ENCODE measurements at regions of chr20 and their contacts with region 1.

Region 1: DNA sequence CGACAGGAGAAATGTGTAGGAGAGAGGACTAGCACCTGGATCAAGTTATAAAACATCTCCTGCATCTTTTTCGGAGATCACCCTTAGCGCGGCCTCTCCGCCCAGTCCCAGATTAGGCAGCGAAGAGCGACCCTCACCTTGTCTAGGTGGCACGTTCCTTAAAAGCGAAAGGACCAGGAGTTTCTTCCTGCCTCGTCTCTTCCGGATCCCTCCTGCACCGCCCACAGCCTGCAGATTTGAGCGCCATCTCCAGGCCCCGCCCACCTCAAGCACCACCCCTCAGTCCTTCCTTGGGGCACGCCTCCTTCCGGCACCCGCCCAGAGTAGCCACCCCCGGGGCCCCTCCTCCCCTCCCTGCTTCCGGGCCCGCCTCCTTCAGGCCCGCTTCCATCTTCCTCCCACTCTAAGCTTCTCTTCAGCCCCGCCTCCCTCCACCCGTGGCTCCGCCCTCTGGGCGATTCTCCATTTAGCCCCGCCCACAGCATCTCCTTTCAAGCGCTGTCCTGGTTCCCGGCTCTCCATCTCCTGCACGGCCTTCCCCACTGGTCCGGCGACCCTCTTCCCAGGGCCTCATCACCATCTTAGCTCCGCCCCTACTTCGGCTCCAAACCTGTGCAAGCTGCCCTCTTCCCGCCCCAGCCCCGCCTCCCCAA is 662 bp upstream of the RALY start:
- DNase-seq: peak; percentile 98
- H3K4me3 Mint-ChIP-seq: peak overlapping the region; percentile 95
- H3K27ac Mint-ChIP-seq: peak overlapping the region; percentile 96
- H3K4me1 Mint-ChIP-seq: peaks cover 16% of the 10 kb centered on the region
- H3K27me3 Mint-ChIP-seq: no peaks in the 10 kb centered on the region
- CTCF ChIP-seq: no peak

Region 2: DNA sequence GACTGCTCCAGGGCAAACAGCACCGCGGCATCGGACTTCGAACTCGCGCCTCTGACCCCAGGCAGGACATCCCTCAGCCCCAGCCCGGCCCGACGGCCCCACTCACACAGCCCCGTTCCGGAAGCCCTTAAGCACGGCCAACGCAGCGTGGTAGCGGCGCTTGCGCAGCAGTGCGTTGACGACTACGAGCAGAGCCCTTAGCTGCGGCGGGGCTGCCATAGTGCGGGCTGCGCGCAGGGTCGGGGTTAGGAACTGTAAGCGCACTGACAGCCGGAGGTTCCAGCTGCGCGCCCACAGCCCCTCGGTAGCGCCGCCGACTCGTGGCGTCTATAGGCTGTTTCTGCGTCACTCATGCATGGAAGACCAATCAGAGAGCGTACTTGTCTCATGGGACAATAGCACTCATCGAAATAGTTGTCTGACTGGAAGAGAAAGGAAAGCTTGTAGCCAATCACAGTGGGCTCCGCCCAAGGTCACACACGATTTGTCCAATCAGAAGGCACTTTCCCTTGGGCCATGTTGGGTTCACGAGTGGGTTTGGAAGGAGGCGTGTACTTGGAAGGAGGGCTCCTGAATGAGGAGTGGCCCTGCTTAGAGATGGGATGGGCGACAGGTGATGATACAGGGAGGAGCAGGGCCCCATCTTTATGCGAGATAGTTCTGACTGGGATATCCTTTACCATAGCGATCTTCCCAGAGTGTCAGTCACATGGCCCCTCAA is 272.9 kb before region 1 on chr20 and contains the start of gene PXMP4:
- CTCF ChIA-PET with region 1: no interaction called
- POLR2A ChIA-PET with region 1: interaction called, 13 read pairs
- intact Hi-C with region 1: no loop called
- DNase-seq: peak; percentile 98
- H3K4me3 Mint-ChIP-seq: peak within 1 kb of the TSS; percentile 67
- H3K27ac Mint-ChIP-seq: peak within 1 kb of the TSS; percentile 0
- H3K4me1 Mint-ChIP-seq: peaks cover 9% of the 10 kb centered on the region
- H3K27me3 Mint-ChIP-seq: no peaks in the 10 kb centered on the region
- CTCF ChIP-seq: no peak
- total RNA-seq, gene PXMP4: 3.9 and 5.2 TPM in 2 replicates

Region 3: GRCh38 chr20:33791959-33792597 is 201.0 kb before region 1 on chr20:
- CTCF ChIA-PET with region 1: no interaction called
- POLR2A ChIA-PET with region 1: interaction called, 11 read pairs
- intact Hi-C with region 1: no loop called
- DNase-seq: peak; percentile 48
- H3K4me3 Mint-ChIP-seq: no peak overlapping the region
- H3K27ac Mint-ChIP-seq: no peak overlapping the region
- H3K4me1 Mint-ChIP-seq: peaks cover 24% of the 10 kb centered on the region
- H3K27me3 Mint-ChIP-seq: no peaks in the 10 kb centered on the region
- CTCF ChIP-seq: peak; percentile 87

Region 4: GRCh38 chr20:33947709-33948295 is 45.2 kb before region 1 on chr20:
- CTCF ChIA-PET with region 1: no interaction called
- POLR2A ChIA-PET with region 1: interaction called, 9 read pairs
- intact Hi-C with region 1: loop called (anchors 5 kb)
- DNase-seq: peak; percentile 62
- H3K4me3 Mint-ChIP-seq: no peak overlapping the region
- H3K27ac Mint-ChIP-seq: no peak overlapping the region
- H3K4me1 Mint-ChIP-seq: peaks cover 9% of the 10 kb centered on the region
- H3K27me3 Mint-ChIP-seq: peaks cover 11% of the 10 kb centered on the region
- CTCF ChIP-seq: peak; percentile 63

Region 5: GRCh38 chr20:34022154-34022838 is 29.2 kb after region 1 on chr20:
- CTCF ChIA-PET with region 1: interaction called, 3 read pairs
- POLR2A ChIA-PET with region 1: interaction called, 10 read pairs
- intact Hi-C with region 1: no loop called
- DNase-seq: peak; percentile 45
- H3K4me3 Mint-ChIP-seq: no peak overlapping the region
- H3K27ac Mint-ChIP-seq: no peak overlapping the region
- H3K4me1 Mint-ChIP-seq: peaks cover 29% of the 10 kb centered on the region
- H3K27me3 Mint-ChIP-seq: no peaks in the 10 kb centered on the region
- CTCF ChIP-seq: peak; percentile 32

Region 6: GRCh38 chr20:34083137-34083536 is 90.1 kb after region 1 on chr20:
- CTCF ChIA-PET with region 1: interaction called, 5 read pairs
- POLR2A ChIA-PET with region 1: interaction called, 21 read pairs
- intact Hi-C with region 1: no loop called
- DNase-seq: peak; percentile 96
- H3K4me3 Mint-ChIP-seq: no peak overlapping the region
- H3K27ac Mint-ChIP-seq: peak overlapping the region; percentile 82
- H3K4me1 Mint-ChIP-seq: peaks cover 24% of the 10 kb centered on the region
- H3K27me3 Mint-ChIP-seq: no peaks in the 10 kb centered on the region
- CTCF ChIP-seq: no peak

Region 7: DNA sequence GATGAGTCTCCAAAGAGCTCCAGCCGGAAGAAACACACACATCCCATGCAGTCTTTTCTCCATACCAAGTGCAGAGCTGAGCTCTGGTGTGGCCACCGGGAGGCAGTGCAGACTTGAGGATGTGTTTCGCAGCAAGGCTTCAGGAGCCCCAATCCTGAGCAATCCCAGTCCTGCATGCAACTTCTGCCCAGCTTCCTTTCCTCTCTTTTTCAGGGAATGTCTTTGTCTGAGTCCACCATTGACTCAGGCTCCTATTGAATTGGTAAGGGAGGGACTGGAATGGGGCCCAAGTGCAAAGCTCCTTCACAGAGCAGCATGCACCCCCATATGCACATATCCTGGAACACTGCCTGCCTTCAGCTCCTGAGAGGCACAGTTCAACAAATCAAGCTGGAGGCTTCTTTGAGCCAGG is 197.6 kb after region 1 on chr20:
- CTCF ChIA-PET with region 1: no interaction called
- POLR2A ChIA-PET with region 1: no interaction called
- intact Hi-C with region 1: no loop called
- DNase-seq: peak; percentile 79
- H3K4me3 Mint-ChIP-seq: no peak overlapping the region
- H3K27ac Mint-ChIP-seq: no peak overlapping the region
- H3K4me1 Mint-ChIP-seq: no peaks in the 10 kb centered on the region
- H3K27me3 Mint-ChIP-seq: peaks cover 38% of the 10 kb centered on the region
- CTCF ChIP-seq: peak; percentile 85

Measured in MCF 10A (cell line).